ENCODE measurements at regions of chr3 and their contacts with region 1.

Region 1: GRCh38 chr3:14178247-14179113 is at the starts of genes LSM3 and XPC:
- DNase-seq: peak; percentile 98
- H3K4me3 ChIP-seq: peak within 1 kb of the TSS; percentile 98
- H3K27ac ChIP-seq: peak within 1 kb of the TSS; percentile 94
- H3K27me3 ChIP-seq: no peaks in the 10 kb centered on the region
- CTCF ChIP-seq: no peak
- polyA plus RNA-seq, gene LSM3: 7.4 and 11.9 TPM in 2 replicates
- polyA plus RNA-seq, gene XPC: 38.4 and 39.0 TPM in 2 replicates

Region 2: DNA sequence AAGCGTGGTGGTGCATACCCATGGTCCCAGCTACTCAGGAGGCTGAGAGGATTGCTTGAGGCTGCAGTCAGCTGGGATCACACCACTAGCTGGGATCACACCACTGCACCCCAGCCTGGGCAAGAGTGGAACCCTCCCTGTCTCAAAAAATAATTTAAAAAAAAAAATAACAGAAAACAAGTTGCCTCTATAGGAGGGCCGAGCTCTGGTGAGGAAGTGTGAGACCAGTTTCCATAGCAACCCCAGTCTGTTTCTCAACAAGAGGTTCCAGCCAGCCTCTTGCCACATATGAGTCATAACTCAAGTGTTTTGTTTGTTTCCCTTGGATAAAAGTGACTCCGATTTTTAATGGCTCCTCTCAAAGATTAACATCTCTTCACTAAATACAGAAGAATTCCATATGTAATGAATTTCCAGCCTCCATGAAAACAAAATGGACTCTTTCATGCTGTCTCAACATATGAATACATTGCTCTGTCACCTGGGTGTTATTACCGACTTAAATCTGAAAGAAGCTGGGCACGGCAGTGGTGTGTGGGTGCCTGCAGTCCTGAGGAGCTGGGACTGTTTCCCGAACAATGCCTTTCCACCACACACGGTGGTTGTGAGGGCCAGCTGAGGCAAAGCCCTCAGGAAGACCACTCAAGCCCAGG is 33.9 kb before region 1 on chr3:
- CTCF ChIA-PET with region 1: no interaction called
- POLR2A ChIA-PET with region 1: interaction called, 30 read pairs
- DNase-seq: peak; percentile 97
- H3K4me3 ChIP-seq: peak overlapping the region; percentile 42
- H3K27ac ChIP-seq: peak overlapping the region; percentile 99
- H3K27me3 ChIP-seq: no peaks in the 10 kb centered on the region
- CTCF ChIP-seq: no peak